Naive thymus-derived CD4-positive, alpha-beta T cell (primary cell): ENCODE measurements at regions of chr7 and their contacts with region 1.

Region 1: GRCh38 chr7:17298207-17298839 is at the start of gene AHR:
- DNase-seq: peak; percentile 66 to 91 (median 81)
- ATAC-seq: peak; percentile 91
- H3K4me3 ChIP-seq: peak within 1 kb of the TSS; percentile 70
- H3K4me3 Mint-ChIP-seq: peak within 1 kb of the TSS; percentile 86 to 98 (median 90)
- H3K27ac ChIP-seq: peak within 1 kb of the TSS; percentile 89
- H3K27ac Mint-ChIP-seq: peak within 1 kb of the TSS; percentile 87 to 97 (median 91)
- H3K4me1 ChIP-seq: peaks cover 9 to 19% of the 10 kb centered on the region in 2 donors
- H3K4me1 Mint-ChIP-seq: peaks cover 19 to 40% (median 27%) of the 10 kb centered on the region in 7 donors
- H3K27me3 ChIP-seq: no peaks in the 10 kb centered on the region
- H3K27me3 Mint-ChIP-seq: no peaks in the 10 kb centered on the region
- total RNA-seq, gene AHR: 15.7 to 109 (median 28.2) TPM

Region 2: GRCh38 chr7:16420649-16421332 is 877.5 kb before region 1 on chr7:
- CTCF ChIA-PET with region 1: no interaction called
- POLR2A ChIA-PET with region 1: interaction called, 4 read pairs
- intact Hi-C with region 1: loop called in 1 of 2 experiments (anchors 2 kb)
- DNase-seq: peak; percentile 71 to 93 (median 88)
- ATAC-seq: peak; percentile 93
- H3K4me3 ChIP-seq: peak overlapping the region; percentile 93
- H3K4me3 Mint-ChIP-seq: peak overlapping the region; percentile 82 to 96 (median 88)
- H3K27ac ChIP-seq: peak overlapping the region; percentile 78
- H3K27ac Mint-ChIP-seq: peak overlapping the region; percentile 84 to 98 (median 92)
- H3K4me1 ChIP-seq: peaks cover 6 to 9% of the 10 kb centered on the region in 2 donors
- H3K4me1 Mint-ChIP-seq: peaks cover 7 to 23% (median 15%) of the 10 kb centered on the region in 7 donors
- H3K27me3 ChIP-seq: no peaks in the 10 kb centered on the region
- H3K27me3 Mint-ChIP-seq: peaks cover 0 to 14% (median 0%) of the 10 kb centered on the region in 5 donors

Region 3: DNA sequence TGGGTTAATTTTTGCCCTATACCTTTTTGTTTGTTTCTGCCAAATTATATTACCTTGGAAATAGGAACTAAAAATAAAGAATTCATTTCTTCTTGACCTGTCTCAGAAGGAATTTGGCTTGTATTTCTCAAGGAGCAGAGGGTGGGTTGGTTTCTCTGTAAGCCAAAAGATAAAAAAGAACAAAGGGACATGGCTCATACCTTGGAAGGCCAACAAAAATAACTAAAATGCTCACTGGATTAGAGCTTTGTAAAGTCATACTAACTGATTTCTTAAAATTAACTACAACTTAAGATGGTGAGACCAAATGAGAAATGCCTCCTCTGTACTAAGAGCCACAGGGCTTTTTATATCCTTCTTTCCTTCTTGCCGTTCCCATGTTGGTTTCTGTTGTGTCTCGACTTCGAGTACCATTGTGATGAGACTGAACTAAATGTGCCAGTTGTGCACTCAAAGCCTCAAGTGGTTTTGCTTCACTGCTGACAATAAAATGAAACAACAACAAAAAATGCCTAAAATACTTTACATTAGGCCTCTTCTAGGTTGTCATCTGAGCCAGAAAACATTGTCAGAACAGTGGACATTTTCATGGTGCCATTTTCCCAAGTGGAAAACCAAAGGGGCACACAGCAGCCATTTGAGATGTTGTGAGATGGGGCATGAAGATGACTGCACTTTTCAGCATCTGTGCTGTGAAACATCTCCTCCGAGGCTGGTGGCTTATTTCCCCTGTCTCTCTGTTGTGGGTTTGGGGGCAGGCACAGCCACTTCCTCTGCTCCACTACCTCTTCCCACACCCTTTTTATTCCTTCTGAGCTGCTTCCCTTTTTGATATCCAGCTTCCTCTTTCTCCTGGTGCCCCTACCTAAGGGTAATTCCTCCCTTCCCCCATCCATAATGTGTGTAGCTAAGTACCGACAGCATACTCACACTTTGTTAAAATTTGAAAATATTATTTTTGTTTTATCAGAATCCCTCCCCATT is 364.7 kb before region 1 on chr7:
- CTCF ChIA-PET with region 1: no interaction called
- POLR2A ChIA-PET with region 1: no interaction called
- intact Hi-C with region 1: loop called in 1 of 2 experiments (anchors 5 kb)
- DNase-seq: peak in 2 of 9 donors; percentile 8 to 25
- ATAC-seq: peak; percentile 73
- H3K4me3 ChIP-seq: no peak overlapping the region
- H3K4me3 Mint-ChIP-seq: peak overlapping the region; percentile 10 to 85 (median 56)
- H3K27ac ChIP-seq: no peak overlapping the region
- H3K27ac Mint-ChIP-seq: peak overlapping the region in 7 of 9 donors; percentile 1 to 69 (median 44)
- H3K4me1 ChIP-seq: peaks cover 0 to 22% of the 10 kb centered on the region in 2 donors
- H3K4me1 Mint-ChIP-seq: peaks cover 6 to 61% (median 53%) of the 10 kb centered on the region in 7 donors
- H3K27me3 ChIP-seq: no peaks in the 10 kb centered on the region
- H3K27me3 Mint-ChIP-seq: peaks cover 0 to 5% (median 0%) of the 10 kb centered on the region in 5 donors

Region 4: GRCh38 chr7:17063045-17063383 is 235.3 kb before region 1 on chr7:
- CTCF ChIA-PET with region 1: interaction called, 18 read pairs
- POLR2A ChIA-PET with region 1: no interaction called
- intact Hi-C with region 1: loop called (anchors 1 to 2 kb)
- DNase-seq: peak in 1 of 9 donors; percentile 2
- ATAC-seq: no peak
- H3K4me3 ChIP-seq: no peak overlapping the region
- H3K4me3 Mint-ChIP-seq: no peak overlapping the region
- H3K27ac ChIP-seq: no peak overlapping the region
- H3K27ac Mint-ChIP-seq: no peak overlapping the region
- H3K4me1 ChIP-seq: no peaks in the 10 kb centered on the region
- H3K4me1 Mint-ChIP-seq: peaks cover 0 to 26% (median 0%) of the 10 kb centered on the region in 7 donors
- H3K27me3 ChIP-seq: no peaks in the 10 kb centered on the region
- H3K27me3 Mint-ChIP-seq: peaks cover 0 to 5% (median 0%) of the 10 kb centered on the region in 5 donors

Region 5: GRCh38 chr7:17159500-17160037 is 138.8 kb before region 1 on chr7:
- CTCF ChIA-PET with region 1: no interaction called
- POLR2A ChIA-PET with region 1: no interaction called
- intact Hi-C with region 1: loop called in 1 of 2 experiments (anchors 1 kb)
- DNase-seq: no peak
- ATAC-seq: no peak
- H3K4me3 ChIP-seq: no peak overlapping the region
- H3K4me3 Mint-ChIP-seq: peak overlapping the region in 1 of 10 donors; percentile 48
- H3K27ac ChIP-seq: no peak overlapping the region
- H3K27ac Mint-ChIP-seq: peak overlapping the region in 4 of 9 donors; percentile 25 to 80 (median 44)
- H3K4me1 ChIP-seq: no peaks in the 10 kb centered on the region
- H3K4me1 Mint-ChIP-seq: peaks cover 0 to 49% (median 7%) of the 10 kb centered on the region in 7 donors
- H3K27me3 ChIP-seq: no peaks in the 10 kb centered on the region
- H3K27me3 Mint-ChIP-seq: peaks cover 0 to 6% (median 0%) of the 10 kb centered on the region in 5 donors

Region 6: DNA sequence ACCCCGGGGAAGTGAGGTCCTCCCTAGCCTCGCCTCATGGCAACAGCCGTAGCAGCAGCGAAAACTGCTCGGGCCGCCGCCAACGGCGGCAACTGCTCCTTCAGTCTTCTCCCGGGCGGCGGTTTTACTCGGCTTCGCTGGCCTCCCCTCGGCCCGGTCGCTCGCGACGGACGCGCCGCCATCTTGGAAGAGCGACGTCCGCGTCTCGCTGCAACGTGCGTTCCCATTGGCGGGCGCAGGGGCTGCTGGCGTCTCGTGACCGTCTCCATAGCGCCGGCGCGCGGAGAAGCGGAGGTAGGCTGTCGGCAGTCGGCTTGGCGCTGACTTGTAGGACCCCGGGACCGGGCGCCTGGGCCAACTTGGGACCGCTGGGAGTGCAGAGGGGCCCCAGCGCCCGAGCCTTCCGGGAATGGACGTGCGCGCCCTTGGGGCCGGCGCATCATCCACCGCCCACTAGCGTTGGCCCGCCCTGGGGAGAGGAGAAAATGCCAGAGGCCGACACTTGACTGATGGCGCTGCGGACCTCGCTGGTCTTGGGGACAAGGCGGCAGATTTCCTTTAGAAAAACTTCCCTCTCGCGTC is 642.1 kb after region 1 on chr7 and contains the start of gene SNX13:
- CTCF ChIA-PET with region 1: no interaction called
- POLR2A ChIA-PET with region 1: no interaction called
- intact Hi-C with region 1: loop called (anchors 1 to 2 kb)
- DNase-seq: peak; percentile 80 to 89 (median 86)
- ATAC-seq: peak; percentile 97
- H3K4me3 ChIP-seq: peak within 1 kb of the TSS; percentile 90
- H3K4me3 Mint-ChIP-seq: peak within 1 kb of the TSS; percentile 98 to 99 (median 99)
- H3K27ac ChIP-seq: peak within 1 kb of the TSS; percentile 95
- H3K27ac Mint-ChIP-seq: peak within 1 kb of the TSS; percentile 91 to 99 (median 98)
- H3K4me1 ChIP-seq: peaks cover 12 to 19% of the 10 kb centered on the region in 2 donors
- H3K4me1 Mint-ChIP-seq: peaks cover 35 to 57% (median 50%) of the 10 kb centered on the region in 7 donors
- H3K27me3 ChIP-seq: no peaks in the 10 kb centered on the region
- H3K27me3 Mint-ChIP-seq: peaks cover 0 to 19% (median 0%) of the 10 kb centered on the region in 5 donors
- total RNA-seq, gene SNX13: 23.8 to 40.9 (median 29.0) TPM

Region 7: GRCh38 chr7:18013936-18014335 is 715.6 kb after region 1 on chr7:
- CTCF ChIA-PET with region 1: no interaction called
- POLR2A ChIA-PET with region 1: no interaction called
- intact Hi-C with region 1: no loop called
- DNase-seq: no peak
- ATAC-seq: no peak
- H3K4me3 ChIP-seq: no peak overlapping the region
- H3K4me3 Mint-ChIP-seq: no peak overlapping the region
- H3K27ac ChIP-seq: no peak overlapping the region
- H3K27ac Mint-ChIP-seq: no peak overlapping the region
- H3K4me1 ChIP-seq: no peaks in the 10 kb centered on the region
- H3K4me1 Mint-ChIP-seq: no peaks in the 10 kb centered on the region
- H3K27me3 ChIP-seq: peaks cover 0 to 2% of the 10 kb centered on the region in 2 donors
- H3K27me3 Mint-ChIP-seq: peaks cover 0 to 43% (median 37%) of the 10 kb centered on the region in 5 donors